Prostate gland (tissue), 2 donors: ENCODE measurements at regions of chr6 and their contacts with region 1.

Region 1: DNA sequence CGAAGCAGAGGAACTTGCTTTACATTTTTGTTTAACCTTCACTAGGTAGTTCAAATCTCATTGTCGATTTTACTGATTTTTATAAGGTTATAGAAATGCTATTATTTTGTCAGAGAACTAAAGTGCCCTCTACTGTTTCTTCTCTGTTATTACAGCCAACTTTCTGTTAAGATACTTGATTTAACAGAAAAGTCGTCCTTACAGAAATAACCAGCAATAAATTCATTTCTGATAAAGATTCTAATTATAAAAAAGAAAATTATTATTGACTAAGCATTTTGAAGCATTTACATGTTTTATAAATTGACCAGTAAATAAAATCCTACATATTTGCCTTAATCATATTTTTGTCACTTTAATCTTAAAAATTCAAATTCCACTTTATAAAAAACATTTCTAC is 60.8 kb downstream of the OGFRL1 start:
- DNase-seq: no peak
- H3K4me3 ChIP-seq: no peak overlapping the region
- H3K27ac ChIP-seq: no peak overlapping the region
- H3K4me1 ChIP-seq: no peaks in the 10 kb centered on the region
- H3K27me3 ChIP-seq: no peaks in the 10 kb centered on the region
- CTCF ChIP-seq: peak in 3 of 4 experiments; percentile 35 to 71 (median 66)
- POLR2A ChIP-seq: no peak

Region 2: DNA sequence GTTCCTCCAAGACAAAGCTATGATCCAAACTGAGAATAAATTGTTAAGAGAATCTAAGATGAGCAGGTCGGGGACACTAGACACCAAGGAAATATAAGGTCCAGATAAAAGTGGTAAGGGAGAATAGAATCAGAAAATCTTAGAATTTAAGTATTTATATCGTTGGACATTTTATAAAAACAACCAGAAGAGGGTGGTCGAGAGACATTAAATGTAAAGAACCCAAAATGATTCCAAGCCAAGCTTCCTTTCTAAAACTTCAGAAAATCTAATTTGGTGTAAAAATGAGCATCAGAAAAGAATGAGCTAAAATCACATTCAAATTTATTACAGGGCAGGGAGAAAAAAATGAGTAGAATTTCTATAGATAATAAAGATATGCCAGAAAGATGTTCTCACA is 158.6 kb before region 1 on chr6:
- intact Hi-C with region 1: loop called (anchors 2 kb)
- DNase-seq: no peak
- H3K4me3 ChIP-seq: no peak overlapping the region
- H3K27ac ChIP-seq: no peak overlapping the region
- H3K4me1 ChIP-seq: no peaks in the 10 kb centered on the region
- H3K27me3 ChIP-seq: no peaks in the 10 kb centered on the region
- CTCF ChIP-seq: peak in 2 of 4 experiments; percentile 32 to 40
- POLR2A ChIP-seq: no peak

Region 3: DNA sequence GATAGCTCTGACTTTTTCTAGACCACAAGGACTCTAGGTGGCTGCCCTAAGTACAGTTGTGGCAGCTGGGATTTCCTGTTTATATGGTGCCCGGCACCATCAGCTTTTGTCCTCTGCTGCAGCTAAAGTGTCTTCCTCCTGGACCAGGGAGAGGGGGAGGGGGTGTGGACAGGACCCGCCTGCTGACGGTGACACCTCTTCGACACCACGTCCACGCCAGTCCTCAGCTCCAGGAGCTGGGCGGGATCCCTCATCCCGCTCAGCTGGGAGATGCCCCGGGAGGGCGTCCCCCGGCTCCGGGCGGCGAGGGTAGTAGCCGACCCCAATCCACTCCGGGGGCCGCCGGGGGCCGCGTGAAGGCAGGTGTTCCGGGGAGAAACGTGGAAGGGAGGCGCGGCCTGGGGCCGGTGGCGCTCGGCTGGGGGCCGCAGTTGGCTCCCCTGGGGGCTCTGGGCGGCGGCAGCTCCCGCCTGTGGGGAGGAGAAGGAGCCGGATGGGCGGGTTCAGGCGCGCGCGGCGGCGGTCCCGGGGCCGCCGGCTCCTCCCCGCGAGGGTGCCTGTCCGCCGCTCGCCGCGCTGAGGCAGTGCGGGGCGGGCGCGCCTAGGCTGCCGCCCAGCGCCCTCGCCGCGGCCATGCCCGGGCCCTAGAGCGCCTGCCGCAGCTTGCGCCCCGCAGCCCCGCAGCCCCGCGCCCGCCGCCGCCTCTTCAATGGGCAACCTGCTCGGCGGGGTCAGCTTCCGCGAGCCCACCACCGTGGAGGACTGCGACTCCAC is 61.0 kb before region 1 on chr6 and contains the start of gene OGFRL1:
- intact Hi-C with region 1: loop called (anchors 5 kb)
- DNase-seq: peak; percentile 74
- H3K4me3 ChIP-seq: peak within 1 kb of the TSS; percentile 69 to 76
- H3K27ac ChIP-seq: peak within 1 kb of the TSS; percentile 87 to 89
- H3K4me1 ChIP-seq: no peaks in the 10 kb centered on the region
- H3K27me3 ChIP-seq: no peaks in the 10 kb centered on the region
- CTCF ChIP-seq: peak in 2 of 4 experiments; percentile 18 to 32
- POLR2A ChIP-seq: peak; percentile 48
- total RNA-seq, gene OGFRL1: 18.4 to 20.4 TPM